ENCODE measurements at regions of chr12 and their contacts with region 1.

Region 1: DNA sequence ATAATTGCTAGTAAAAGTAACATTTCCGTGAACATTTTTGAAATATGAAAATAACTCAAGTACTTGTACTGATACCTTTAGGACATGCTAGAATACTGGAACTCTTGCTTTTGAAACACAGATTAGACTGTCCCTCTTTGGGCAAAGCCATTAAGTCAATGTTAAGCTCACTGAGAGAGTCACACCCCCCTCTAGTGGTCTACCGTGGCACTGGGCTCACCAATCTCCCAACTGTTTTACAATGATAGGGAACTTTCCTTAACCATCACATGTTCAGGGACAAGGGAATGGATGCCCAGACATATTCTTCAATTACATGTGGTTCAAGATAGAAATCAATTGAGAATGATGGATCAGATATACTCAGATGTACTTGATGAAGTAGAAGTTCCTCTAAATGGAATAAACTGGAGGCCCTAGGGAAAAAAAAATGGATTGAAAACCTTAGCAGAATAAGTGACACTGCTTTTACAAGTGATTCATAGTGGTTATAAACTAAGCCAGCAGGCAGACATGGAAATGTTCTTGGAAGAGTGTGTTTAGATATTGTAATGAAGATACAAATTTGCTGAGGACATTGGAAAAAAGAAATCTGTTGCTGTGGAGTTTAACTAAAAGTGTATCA is 17.8 kb downstream of the NANOG start:
- DNase-seq: peak in 9 of 10 donors; percentile 10 to 79 (median 54)
- H3K4me3 ChIP-seq: no peak overlapping the region
- H3K27ac ChIP-seq: no peak overlapping the region
- H3K27me3 ChIP-seq: no peaks in the 10 kb centered on the region
- CTCF ChIP-seq: peak; percentile 22 to 89 (median 74)

Region 2: GRCh38 chr12:7678738-7679137 is 128.2 kb before region 1 on chr12:
- intact Hi-C with region 1: loop called in 1 of 2 experiments (anchors 5 kb)
- DNase-seq: no peak
- H3K4me3 ChIP-seq: no peak overlapping the region
- H3K27ac ChIP-seq: no peak overlapping the region
- H3K27me3 ChIP-seq: no peaks in the 10 kb centered on the region
- CTCF ChIP-seq: no peak